Activated naive CD4-positive, alpha-beta T cell treated with anti-CD3 and anti-CD28 coated beads for 36 hours (primary cell): ENCODE measurements at regions of chr5 and their contacts with region 1.

Region 1: DNA sequence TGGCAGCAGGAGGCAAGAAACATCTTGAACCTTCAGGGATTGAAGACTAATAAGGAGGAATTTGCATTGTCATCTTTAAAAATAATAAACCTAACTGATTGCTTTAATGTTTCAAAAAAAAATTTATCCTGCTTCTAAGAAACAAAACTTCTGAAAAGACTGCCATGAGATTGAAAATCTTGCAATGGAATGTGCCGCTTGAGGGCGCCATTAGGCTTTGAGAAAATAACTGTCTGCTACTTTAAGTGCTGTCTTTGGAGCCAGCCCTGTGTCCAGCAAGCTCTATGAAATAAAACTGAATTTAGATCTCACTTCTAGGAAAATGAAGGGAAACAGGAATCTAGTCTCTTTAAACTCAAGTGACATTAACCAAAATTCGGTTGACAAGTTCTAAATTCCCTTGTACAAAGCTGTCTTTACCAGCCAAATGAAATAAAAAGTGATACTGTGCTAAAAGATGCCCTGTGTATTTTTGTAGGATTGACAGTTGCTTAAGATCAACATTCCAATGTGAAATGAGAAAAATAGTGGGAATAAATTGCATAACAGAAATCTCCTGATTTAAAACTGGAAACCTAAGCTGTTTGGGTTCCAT is 79.4 kb downstream of the ESM1 start:
- DNase-seq: peak; percentile 85
- H3K4me3 Mint-ChIP-seq: no peak overlapping the region
- H3K27ac Mint-ChIP-seq: no peak overlapping the region
- H3K4me1 Mint-ChIP-seq: peaks cover 13% of the 10 kb centered on the region
- H3K27me3 Mint-ChIP-seq: peaks cover 20% of the 10 kb centered on the region

Region 2: DNA sequence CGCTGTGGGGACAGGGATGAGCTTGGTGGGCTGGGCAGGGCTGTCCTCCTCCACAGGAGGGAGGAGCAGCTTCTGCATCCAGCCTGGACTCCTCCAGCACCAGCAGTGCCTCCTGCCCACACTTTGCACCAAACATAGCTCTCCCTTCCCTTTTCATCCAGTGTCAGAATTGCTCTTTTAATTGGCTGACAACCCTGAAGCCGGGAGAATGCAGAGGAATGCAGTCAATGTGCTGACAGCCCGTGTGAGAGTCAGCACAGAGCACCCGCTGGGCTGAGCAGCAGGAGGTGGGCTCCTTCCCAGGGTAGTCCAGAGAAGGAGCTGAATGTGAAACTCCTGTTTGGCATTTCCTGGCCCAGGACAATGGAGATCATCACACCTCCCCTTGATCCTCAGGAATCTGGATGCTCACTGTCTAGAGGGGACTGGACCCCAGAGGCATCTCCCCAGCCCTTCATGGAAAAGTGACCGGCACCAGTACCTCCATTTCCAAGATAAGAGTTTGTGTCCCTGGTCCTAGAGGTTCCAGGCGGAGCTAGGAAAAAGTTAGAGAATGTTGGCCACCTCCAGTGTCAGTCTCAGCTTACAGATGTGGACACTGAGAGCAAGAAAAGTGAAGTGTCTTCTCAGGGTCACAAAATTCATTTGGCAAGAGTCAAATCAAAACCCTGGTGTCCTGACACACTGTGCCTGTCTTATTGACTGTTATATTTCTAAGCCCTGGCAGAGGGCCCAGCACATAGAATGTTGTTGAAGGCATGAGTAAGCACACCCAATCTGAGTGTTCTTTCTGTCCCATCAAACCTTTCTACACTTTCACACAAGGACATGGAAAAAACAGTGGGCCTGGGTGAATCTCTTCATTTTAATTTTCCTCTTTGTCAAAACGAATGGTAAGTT is 186.4 kb before region 1 on chr5:
- CTCF ChIA-PET with region 1: no interaction called
- intact Hi-C with region 1: no loop called
- DNase-seq: peak; percentile 29
- H3K4me3 Mint-ChIP-seq: no peak overlapping the region
- H3K27ac Mint-ChIP-seq: no peak overlapping the region
- H3K4me1 Mint-ChIP-seq: peaks cover 7% of the 10 kb centered on the region
- H3K27me3 Mint-ChIP-seq: no peaks in the 10 kb centered on the region

Region 3: DNA sequence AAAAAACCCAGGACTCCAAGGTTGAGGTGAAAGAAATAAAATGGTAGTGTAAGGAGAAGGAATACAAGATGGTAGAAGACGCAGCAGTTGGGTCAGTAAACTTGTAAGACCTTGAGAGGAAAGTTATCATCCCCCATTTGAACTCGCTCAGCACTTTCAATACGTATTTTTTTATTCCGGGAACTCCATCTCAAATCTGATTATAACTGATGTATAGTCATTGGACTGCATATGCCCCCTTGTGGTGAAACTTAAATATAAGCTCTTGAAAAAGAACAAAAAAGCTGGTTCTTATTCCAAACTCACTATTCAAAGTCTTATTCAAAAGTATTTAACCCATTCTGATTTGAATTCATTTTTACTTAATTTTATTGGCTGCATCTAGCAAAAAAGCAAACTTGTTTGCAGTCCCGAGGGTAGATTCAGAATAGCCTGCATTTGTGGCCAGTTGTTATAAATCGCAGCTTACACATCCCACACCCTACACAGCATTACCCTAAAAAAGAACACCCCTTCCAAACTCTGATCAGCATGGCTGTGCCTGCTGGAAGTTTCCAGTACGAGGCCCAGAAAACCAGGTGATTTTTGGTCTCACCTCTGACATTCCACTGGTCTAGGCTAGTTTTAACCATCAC is 38.6 kb before region 1 on chr5:
- CTCF ChIA-PET with region 1: interaction called, 10 read pairs
- intact Hi-C with region 1: loop called (anchors 1 kb)
- DNase-seq: no peak
- H3K4me3 Mint-ChIP-seq: no peak overlapping the region
- H3K27ac Mint-ChIP-seq: no peak overlapping the region
- H3K4me1 Mint-ChIP-seq: peaks cover 16% of the 10 kb centered on the region
- H3K27me3 Mint-ChIP-seq: peaks cover 11% of the 10 kb centered on the region

Region 4: DNA sequence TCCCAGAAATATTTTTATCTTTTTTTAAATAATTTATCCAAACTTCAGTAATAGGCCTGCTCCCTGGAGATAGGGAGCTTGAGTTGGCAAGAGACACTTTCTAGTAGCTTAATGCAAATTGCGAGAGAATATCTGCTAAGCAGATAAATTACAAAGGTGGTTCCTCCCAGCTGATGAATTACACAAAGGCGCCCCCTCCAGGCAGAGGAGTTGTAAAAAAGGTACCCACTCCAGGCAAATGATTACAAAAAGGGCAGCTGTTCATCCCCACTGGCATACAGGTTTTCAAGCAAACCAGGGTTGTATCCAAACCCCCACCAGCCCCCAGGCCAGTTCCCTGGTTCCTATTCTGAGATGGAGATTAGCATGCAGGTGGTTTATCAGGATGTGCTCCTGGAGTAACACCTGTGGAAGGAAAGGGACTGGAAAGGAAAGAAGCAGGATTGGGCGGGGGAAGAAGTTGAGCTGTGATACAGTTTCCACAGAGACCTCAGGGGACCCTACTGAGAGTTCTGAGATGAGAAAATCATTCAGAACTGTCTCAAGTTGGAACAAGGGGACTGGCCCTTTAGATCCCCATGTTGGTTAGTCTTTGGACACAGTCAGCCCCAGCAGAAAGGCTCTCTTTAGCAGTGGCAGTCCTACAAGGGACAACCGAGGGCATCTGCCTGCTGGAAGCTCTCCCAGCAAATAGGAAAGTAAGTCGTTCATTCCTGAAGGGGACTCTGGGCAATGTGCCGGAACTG is 53.8 kb after region 1 on chr5:
- CTCF ChIA-PET with region 1: interaction called, 19 read pairs
- intact Hi-C with region 1: loop called (anchors 5 kb)
- DNase-seq: peak; percentile 65
- H3K4me3 Mint-ChIP-seq: no peak overlapping the region
- H3K27ac Mint-ChIP-seq: no peak overlapping the region
- H3K4me1 Mint-ChIP-seq: no peaks in the 10 kb centered on the region
- H3K27me3 Mint-ChIP-seq: peaks cover 2% of the 10 kb centered on the region

Region 5: GRCh38 chr5:55072666-55073065 is 166.6 kb after region 1 on chr5:
- CTCF ChIA-PET with region 1: interaction called, 3 read pairs
- intact Hi-C with region 1: loop called (anchors 1 kb)
- DNase-seq: no peak
- H3K4me3 Mint-ChIP-seq: no peak overlapping the region
- H3K27ac Mint-ChIP-seq: peak overlapping the region; percentile 34
- H3K4me1 Mint-ChIP-seq: peaks cover 33% of the 10 kb centered on the region
- H3K27me3 Mint-ChIP-seq: no peaks in the 10 kb centered on the region

Region 6: GRCh38 chr5:55151923-55152842 is 246.1 kb after region 1 on chr5:
- CTCF ChIA-PET with region 1: interaction called, 20 read pairs
- intact Hi-C with region 1: no loop called
- DNase-seq: no peak
- H3K4me3 Mint-ChIP-seq: no peak overlapping the region
- H3K27ac Mint-ChIP-seq: no peak overlapping the region
- H3K4me1 Mint-ChIP-seq: no peaks in the 10 kb centered on the region
- H3K27me3 Mint-ChIP-seq: peaks cover 7% of the 10 kb centered on the region